Panc1 (cell line): ENCODE measurements at regions of chr11 and their contacts with region 1.

Region 1: GRCh38 chr11:86802601-86803051 is 2.3 kb downstream of the PRSS23 start:
- DNase-seq: no peak
- ATAC-seq: peak; percentile 46
- H3K4me3 ChIP-seq: peak overlapping the region; percentile 76 to 90
- H3K27ac ChIP-seq: peak overlapping the region; percentile 95
- H3K4me1 ChIP-seq: peaks cover 64% of the 10 kb centered on the region
- H3K27me3 ChIP-seq: no peaks in the 10 kb centered on the region
- CTCF ChIP-seq: peak; percentile 81

Region 2: GRCh38 chr11:86608251-86608799 is 194.3 kb before region 1 on chr11:
- CTCF ChIA-PET with region 1: interaction called, 6 read pairs
- POLR2A ChIA-PET with region 1: no interaction called
- in situ Hi-C with region 1: no loop called
- intact Hi-C with region 1: loop called (anchors 5 kb)
- DNase-seq: no peak
- ATAC-seq: peak; percentile 75
- H3K4me3 ChIP-seq: peak overlapping the region in 1 of 2 experiments; percentile 21; a peak in 2 of 4 replicates
- H3K27ac ChIP-seq: peak overlapping the region; percentile 78
- H3K4me1 ChIP-seq: peaks cover 52% of the 10 kb centered on the region
- H3K27me3 ChIP-seq: no peaks in the 10 kb centered on the region
- CTCF ChIP-seq: peak; percentile 100

Region 3: DNA sequence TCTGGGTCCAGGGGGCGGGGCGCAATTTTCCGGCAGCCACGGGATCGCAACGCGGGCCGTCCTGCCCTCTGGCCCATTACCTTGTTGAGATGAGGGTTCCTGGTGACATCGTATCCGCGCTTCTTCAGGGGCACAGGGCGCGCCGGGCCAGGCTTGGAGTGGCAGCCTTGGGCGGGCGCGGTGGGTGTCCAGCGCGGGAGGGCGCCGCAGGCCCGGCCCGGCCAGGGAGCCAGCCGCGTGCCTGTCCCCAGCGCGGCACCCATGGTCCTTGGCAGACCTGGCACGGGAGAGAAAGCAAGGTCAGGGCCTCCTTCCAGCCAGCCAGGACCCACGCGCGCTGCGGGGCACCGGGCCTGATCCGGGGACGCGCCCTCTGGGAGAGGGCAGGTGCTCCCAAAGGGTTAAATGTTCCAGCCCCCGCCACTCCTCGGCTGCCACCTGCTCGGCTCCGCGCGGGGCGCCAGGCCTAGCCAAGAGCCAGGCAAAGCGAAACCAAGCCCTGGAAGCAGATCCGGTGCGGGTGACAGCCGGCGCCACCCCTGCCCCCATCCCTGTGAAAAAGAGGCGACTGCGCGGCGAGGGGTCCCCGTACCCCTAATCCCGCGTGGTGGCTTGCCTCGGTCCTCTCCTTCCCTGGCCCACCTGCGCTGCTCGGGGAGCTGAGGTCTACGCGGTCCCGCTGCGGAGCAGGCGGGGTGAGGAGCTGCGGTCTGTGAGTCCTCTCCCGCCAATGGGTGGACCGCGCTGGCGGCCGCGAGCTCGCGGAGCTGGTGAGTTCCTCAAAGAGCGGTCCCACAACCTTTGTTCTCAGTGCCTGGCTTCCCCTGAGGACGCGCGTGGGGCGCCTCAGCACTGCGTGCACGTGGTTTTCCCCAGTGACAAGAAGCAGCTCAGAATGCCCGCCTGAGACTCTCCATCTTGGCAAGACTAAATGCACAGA is 130.7 kb before region 1 on chr11 and contains the start of gene ME3:
- CTCF ChIA-PET with region 1: interaction called, 7 read pairs
- POLR2A ChIA-PET with region 1: no interaction called
- in situ Hi-C with region 1: no loop called
- intact Hi-C with region 1: loop called (anchors 2 kb)
- DNase-seq: no peak
- ATAC-seq: peak; percentile 86
- H3K4me3 ChIP-seq: peak within 1 kb of the TSS; percentile 67 to 77
- H3K27ac ChIP-seq: peak within 1 kb of the TSS; percentile 99
- H3K4me1 ChIP-seq: peaks cover 70% of the 10 kb centered on the region
- H3K27me3 ChIP-seq: no peaks in the 10 kb centered on the region
- CTCF ChIP-seq: peak; percentile 40
- total RNA-seq, gene ME3: 35.3 TPM

Region 4: DNA sequence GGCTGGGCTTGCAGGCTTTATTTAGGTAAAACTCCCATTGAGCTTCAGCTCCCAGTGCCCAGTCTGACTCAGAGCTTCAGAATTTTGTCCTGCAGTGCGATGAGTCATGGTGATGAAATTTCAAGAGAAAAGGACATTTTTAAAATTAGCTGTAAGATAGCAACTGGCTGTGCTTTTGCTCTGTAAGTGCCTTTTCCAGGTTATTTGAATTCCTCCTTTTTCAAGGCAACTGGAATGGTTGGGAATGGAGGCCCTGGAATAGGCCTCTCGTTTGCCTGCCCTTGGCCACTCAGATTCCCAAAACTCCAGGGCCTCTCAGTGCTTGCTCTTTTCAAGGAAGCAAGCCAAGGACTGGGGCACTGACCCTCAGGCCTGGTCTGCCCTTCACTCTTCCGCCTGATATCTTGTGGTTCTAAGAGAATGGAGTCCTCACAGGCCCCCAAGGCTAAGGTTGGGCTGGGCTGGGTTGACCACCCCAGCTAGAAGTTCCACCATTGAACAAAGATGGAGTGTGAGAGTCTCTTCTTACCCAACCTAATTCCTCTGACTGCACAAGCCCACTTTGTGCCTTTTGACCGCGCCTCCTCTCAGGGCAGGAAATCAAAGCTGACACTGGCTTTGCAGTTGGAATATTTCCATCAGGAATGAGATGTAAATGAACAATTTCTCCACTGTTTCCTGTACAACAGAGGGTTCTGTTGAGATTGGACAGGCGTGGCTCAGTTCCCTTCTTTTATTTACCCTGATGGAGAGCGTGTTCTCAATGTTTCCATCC is 61.7 kb before region 1 on chr11:
- CTCF ChIA-PET with region 1: no interaction called
- POLR2A ChIA-PET with region 1: interaction called, 3 read pairs
- in situ Hi-C with region 1: no loop called
- intact Hi-C with region 1: loop called (anchors 2 kb)
- DNase-seq: peak; percentile 97
- ATAC-seq: peak; percentile 51
- H3K4me3 ChIP-seq: no peak overlapping the region
- H3K27ac ChIP-seq: peak overlapping the region; percentile 99
- H3K4me1 ChIP-seq: peaks cover 79% of the 10 kb centered on the region
- H3K27me3 ChIP-seq: no peaks in the 10 kb centered on the region
- CTCF ChIP-seq: no peak